Breast epithelium (tissue), 4 donors: ENCODE measurements at regions of chr3 and their contacts with region 1.

Region 1: DNA sequence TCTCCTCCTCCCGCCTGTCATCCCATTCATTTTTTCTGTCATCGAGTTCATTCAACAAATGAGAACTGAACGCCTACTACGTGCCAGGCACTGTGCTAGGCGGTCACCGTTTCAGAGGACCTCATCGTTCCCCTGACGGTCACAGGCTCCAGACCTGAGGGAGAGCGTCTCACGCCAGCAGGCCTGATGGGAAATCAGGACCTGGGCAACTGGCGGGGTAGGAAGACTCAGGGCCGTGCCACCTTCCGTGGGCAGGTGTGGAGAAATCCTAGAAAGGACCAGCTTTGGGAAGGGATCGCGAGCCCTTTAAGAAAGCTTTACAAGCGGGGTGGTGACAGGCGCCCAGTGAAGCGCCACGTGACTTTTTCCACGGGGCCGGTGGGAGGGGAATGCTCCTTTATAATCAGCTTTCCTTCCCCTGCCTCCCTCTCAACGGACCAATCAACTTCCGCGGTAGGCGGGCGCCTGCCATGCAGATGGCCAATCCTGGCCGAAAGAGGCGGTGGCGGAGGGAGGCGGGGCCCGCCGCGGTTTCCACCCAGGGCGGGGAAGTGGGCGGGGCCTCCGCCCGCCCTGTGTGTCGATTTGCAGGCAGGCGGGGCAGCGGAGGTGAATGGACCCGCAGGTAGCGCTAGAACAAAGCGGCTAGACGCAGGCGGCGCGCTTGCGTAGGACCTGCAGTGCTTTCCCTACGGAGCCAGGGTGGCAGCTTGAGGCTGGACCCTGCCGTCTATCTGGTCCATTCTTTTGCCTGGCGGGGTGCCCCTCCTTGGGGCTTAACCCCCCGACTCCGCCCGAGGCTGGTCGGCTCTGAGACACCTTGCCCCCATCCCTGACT is 816 bp upstream of the DUSP7 start:
- DNase-seq: peak; percentile 99
- H3K4me3 ChIP-seq: peak overlapping the region; percentile 52 to 95 (median 78)
- H3K27ac ChIP-seq: peak overlapping the region; percentile 92 to 94
- H3K4me1 ChIP-seq: peaks cover 16 to 26% of the 10 kb centered on the region in 2 donors
- H3K27me3 ChIP-seq: no peaks in the 10 kb centered on the region
- CTCF ChIP-seq: peak in 1 of 3 donors; percentile 12
- POLR2A ChIP-seq: no peak

Region 2: DNA sequence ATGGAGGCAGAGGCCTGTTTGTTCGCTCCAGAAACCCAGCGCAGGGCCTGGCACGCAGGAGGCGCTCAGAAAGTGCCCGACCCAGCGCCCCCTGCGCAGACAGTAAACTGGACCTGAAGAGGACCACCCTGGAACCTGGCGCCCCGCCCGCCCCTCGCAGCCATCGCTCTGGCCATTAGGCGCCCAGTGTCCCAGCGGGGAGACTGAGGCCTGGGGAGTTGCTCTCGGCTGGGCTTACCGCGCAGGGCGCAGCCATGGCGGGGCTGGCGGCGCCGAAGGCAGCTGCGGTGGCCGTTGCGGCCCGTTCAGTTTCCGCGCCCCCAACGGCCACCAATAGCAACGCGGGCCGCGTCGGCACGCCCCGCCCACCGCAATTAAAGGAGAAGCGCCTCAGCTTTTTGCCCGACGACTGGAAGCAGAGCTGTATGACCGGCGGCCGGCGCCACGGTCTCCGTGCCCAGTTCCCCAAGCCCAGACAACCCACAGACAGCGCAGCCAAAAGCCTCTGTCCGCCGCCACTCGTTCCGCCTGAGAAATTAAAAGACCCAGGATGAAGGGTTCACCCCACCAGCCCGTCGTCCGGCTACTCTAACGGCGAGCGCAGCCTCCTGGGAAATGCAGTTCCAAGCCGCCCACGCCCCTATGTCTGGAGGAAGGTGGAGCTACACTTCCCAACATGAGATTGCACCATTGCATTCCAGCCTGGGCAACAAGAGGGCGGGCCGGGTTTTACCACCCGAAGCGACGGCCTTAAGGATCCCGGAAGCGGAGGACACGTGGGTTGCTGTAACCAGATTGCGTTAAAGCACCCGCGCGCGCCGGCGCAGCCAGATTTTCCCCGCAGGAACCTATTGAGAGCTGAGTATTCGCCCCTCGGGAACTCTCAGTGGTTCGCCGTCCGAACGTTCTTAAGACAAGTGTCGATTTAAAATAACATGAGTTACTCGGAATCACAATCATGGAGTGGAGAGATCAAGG is 97.2 kb after region 1 on chr3 and contains the start of gene POC1A:
- intact Hi-C with region 1: loop called (anchors 5 kb)
- DNase-seq: peak; percentile 96
- H3K4me3 ChIP-seq: peak within 1 kb of the TSS; percentile 57 to 82 (median 68)
- H3K27ac ChIP-seq: peak within 1 kb of the TSS; percentile 85 to 94
- H3K4me1 ChIP-seq: peaks cover 0 to 10% of the 10 kb centered on the region in 2 donors
- H3K27me3 ChIP-seq: no peaks in the 10 kb centered on the region
- CTCF ChIP-seq: peak in 2 of 3 donors; percentile 18 to 32
- POLR2A ChIP-seq: peak; percentile 67
- total RNA-seq, gene POC1A: 1.9 to 2.7 (median 2.6) TPM